ENCODE measurements at regions of chr2 and their contacts with region 1.

Region 1: GRCh38 chr2:97663965-97664635 is at the start of gene ACTR1B:
- DNase-seq: peak; percentile 92
- ATAC-seq: peak; percentile 91
- H3K4me3 ChIP-seq: peak within 1 kb of the TSS; percentile 98
- H3K27ac ChIP-seq: peak within 1 kb of the TSS; percentile 96
- H3K4me1 ChIP-seq: no peaks in the 10 kb centered on the region; the same call in 1 of the 2 replicates
- H3K27me3 ChIP-seq: no peaks in the 10 kb centered on the region
- CTCF ChIP-seq: peak; percentile 52 to 62 (median 52)
- EP300 ChIP-seq: no peak
- POLR2A ChIP-seq: peak; percentile 74
- RAD21 ChIP-seq: peak; percentile 68
- polyA plus RNA-seq, gene ACTR1B: 1.3 to 5.2 TPM

Region 2: DNA sequence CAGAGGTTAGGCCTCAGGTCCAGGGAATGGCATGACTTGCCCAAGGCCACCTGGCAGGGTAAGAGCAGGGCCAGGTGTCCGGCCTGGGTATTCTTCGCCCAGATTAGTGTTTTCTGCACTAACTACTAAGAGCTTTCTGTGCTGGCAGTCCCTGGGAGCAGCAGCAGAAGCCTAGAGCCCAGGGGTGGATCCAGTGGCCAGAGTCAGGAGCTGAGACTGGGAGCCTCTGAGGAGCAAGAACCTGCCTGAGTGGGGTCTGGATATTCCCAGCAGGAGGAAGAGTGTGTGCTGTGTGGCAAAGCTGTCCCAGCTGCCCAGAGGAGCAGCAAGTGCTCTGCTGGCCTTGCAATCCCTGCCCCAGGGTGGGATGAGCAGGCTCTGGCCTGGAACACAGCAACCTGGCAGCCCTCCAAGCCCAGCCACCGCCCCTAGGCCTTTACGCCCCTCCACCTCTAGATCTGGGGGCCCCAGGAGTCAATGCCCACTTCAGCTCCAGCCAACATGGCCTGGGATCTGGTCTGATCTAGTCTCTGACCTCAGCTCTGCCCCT is 1598.6 kb before region 1 on chr2:
- CTCF ChIA-PET with region 1: interaction called, 3 read pairs
- POLR2A ChIA-PET with region 1: interaction called, 3 read pairs
- RAD21 ChIA-PET with region 1: interaction called, 3 read pairs
- SMC1A ChIA-PET with region 1: interaction called, 3 read pairs
- in situ Hi-C with region 1: loop called (anchors 10 kb)
- intact Hi-C with region 1: no loop called
- DNase-seq: no peak
- ATAC-seq: no peak
- H3K4me3 ChIP-seq: no peak overlapping the region
- H3K27ac ChIP-seq: no peak overlapping the region
- H3K4me1 ChIP-seq: no peaks in the 10 kb centered on the region
- H3K27me3 ChIP-seq: no peaks in the 10 kb centered on the region; a peak in 1 of 4 replicates
- CTCF ChIP-seq: no peak
- EP300 ChIP-seq: no peak
- POLR2A ChIP-seq: no peak
- RAD21 ChIP-seq: no peak

Region 3: DNA sequence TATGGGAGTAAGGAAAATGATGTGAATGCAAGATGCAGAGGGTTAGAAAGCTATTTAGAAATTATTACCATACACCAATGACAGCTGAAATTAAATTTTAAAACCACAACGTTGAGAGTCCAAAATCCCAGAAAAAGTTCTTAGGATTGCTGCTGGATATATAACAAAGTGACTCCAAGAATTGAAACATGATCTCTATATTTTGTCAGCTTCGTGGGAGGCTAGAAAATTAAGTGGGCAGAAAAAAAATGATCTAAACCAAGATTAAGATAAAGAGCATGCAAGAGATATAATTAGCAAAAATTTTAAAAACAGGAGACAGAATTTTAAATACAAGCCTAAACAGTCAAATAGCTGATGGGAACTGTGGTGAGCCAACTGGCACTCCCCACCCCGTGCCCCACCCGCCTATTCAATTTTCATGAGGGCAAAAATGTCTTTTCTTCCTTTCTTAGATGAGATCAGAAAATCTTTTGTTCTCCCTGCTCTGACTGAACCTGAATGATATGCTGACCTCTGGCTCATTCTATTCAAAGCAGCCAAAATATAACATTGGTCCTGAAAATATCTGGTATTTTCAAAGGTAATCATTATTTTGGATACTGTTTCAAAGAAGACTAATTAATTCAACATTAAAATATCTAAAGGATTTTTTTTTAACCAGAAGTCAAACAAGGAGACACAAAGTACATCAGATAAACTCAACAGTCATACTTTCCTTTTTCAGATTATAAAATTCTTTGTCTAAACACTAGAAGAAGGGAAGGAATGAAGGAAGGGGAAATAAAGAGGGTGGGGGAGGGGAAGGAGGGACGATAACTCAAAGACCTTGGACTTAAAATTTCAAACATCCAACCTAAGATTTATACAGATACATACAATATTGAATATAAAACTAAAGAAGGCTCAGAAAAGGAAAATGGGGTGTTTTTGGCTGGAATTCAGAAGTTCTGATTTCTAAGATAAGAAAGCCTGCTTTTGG is 1038.2 kb before region 1 on chr2:
- CTCF ChIA-PET with region 1: no interaction called
- POLR2A ChIA-PET with region 1: no interaction called
- RAD21 ChIA-PET with region 1: no interaction called
- SMC1A ChIA-PET with region 1: no interaction called
- in situ Hi-C with region 1: no loop called
- intact Hi-C with region 1: no loop called
- DNase-seq: no peak
- ATAC-seq: no peak
- H3K4me3 ChIP-seq: no peak overlapping the region
- H3K27ac ChIP-seq: no peak overlapping the region
- H3K4me1 ChIP-seq: no peaks in the 10 kb centered on the region
- H3K27me3 ChIP-seq: no peaks in the 10 kb centered on the region
- CTCF ChIP-seq: no peak
- EP300 ChIP-seq: no peak
- POLR2A ChIP-seq: no peak
- RAD21 ChIP-seq: no peak

Region 4: GRCh38 chr2:97645695-97646629 is 18.1 kb before region 1 on chr2 and contains the start of gene COX5B:
- CTCF ChIA-PET with region 1: interaction called, 22 read pairs
- POLR2A ChIA-PET with region 1: interaction called, 132 read pairs
- RAD21 ChIA-PET with region 1: interaction called, 48 read pairs
- SMC1A ChIA-PET with region 1: interaction called, 29 read pairs
- in situ Hi-C with region 1: no loop called
- intact Hi-C with region 1: loop called (anchors 2 kb)
- DNase-seq: peak; percentile 89
- ATAC-seq: peak; percentile 97
- H3K4me3 ChIP-seq: peak within 1 kb of the TSS; percentile 99
- H3K27ac ChIP-seq: peak within 1 kb of the TSS; percentile 81
- H3K4me1 ChIP-seq: no peaks in the 10 kb centered on the region; the same call in 1 of the 2 replicates
- H3K27me3 ChIP-seq: no peaks in the 10 kb centered on the region
- CTCF ChIP-seq: no peak
- EP300 ChIP-seq: no peak
- POLR2A ChIP-seq: peak; percentile 97
- RAD21 ChIP-seq: no peak
- polyA plus RNA-seq, gene COX5B: 150 to 392 TPM

Region 5: GRCh38 chr2:97651114-97651513 is 13.0 kb before region 1 on chr2:
- CTCF ChIA-PET with region 1: interaction called, 22 read pairs
- POLR2A ChIA-PET with region 1: interaction called, 132 read pairs
- RAD21 ChIA-PET with region 1: interaction called, 48 read pairs
- SMC1A ChIA-PET with region 1: interaction called, 29 read pairs
- in situ Hi-C with region 1: no loop called
- intact Hi-C with region 1: loop called (anchors 2 kb)
- DNase-seq: no peak
- ATAC-seq: no peak
- H3K4me3 ChIP-seq: no peak overlapping the region
- H3K27ac ChIP-seq: no peak overlapping the region
- H3K4me1 ChIP-seq: no peaks in the 10 kb centered on the region
- H3K27me3 ChIP-seq: no peaks in the 10 kb centered on the region
- CTCF ChIP-seq: no peak
- EP300 ChIP-seq: no peak
- POLR2A ChIP-seq: no peak
- RAD21 ChIP-seq: no peak

Region 6: GRCh38 chr2:97688062-97688827 is 24.1 kb after region 1 on chr2:
- CTCF ChIA-PET with region 1: interaction called, 13 read pairs
- POLR2A ChIA-PET with region 1: interaction called, 16 read pairs
- RAD21 ChIA-PET with region 1: interaction called, 4 read pairs
- SMC1A ChIA-PET with region 1: interaction called, 8 read pairs
- in situ Hi-C with region 1: no loop called
- intact Hi-C with region 1: no loop called
- DNase-seq: peak; percentile 30
- ATAC-seq: peak; percentile 94
- H3K4me3 ChIP-seq: no peak overlapping the region
- H3K27ac ChIP-seq: no peak overlapping the region
- H3K4me1 ChIP-seq: peaks cover 3% of the 10 kb centered on the region; the same call in 1 of the 2 replicates
- H3K27me3 ChIP-seq: no peaks in the 10 kb centered on the region
- CTCF ChIP-seq: no peak
- EP300 ChIP-seq: no peak
- POLR2A ChIP-seq: no peak
- RAD21 ChIP-seq: no peak

Region 7: DNA sequence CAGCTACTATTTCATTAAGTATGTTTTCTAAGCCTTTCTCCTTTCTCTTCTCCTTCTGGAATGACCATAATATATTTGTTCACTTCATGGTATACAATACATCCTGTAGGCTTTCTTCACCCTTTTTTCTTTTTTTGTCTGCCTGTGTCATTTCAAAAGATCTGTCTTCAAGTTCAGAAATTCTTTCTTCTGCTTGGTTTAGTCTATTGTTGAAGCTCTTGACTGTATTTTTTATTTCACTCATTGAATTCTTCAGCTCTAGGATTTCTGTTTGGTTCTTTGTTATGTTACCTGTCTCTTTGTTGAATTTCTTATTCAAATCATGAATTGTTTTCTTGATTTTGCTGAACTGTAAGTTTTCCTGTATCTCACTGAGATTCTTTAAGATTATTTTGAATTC is 221.7 kb after region 1 on chr2:
- CTCF ChIA-PET with region 1: no interaction called
- POLR2A ChIA-PET with region 1: no interaction called
- RAD21 ChIA-PET with region 1: no interaction called
- SMC1A ChIA-PET with region 1: no interaction called
- in situ Hi-C with region 1: no loop called
- intact Hi-C with region 1: no loop called
- DNase-seq: no peak
- ATAC-seq: no peak
- H3K4me3 ChIP-seq: no peak overlapping the region
- H3K27ac ChIP-seq: no peak overlapping the region
- H3K4me1 ChIP-seq: no peaks in the 10 kb centered on the region; the same call in 1 of the 2 replicates
- H3K27me3 ChIP-seq: no peaks in the 10 kb centered on the region
- CTCF ChIP-seq: no peak
- EP300 ChIP-seq: no peak
- POLR2A ChIP-seq: no peak
- RAD21 ChIP-seq: no peak

Region 8: DNA sequence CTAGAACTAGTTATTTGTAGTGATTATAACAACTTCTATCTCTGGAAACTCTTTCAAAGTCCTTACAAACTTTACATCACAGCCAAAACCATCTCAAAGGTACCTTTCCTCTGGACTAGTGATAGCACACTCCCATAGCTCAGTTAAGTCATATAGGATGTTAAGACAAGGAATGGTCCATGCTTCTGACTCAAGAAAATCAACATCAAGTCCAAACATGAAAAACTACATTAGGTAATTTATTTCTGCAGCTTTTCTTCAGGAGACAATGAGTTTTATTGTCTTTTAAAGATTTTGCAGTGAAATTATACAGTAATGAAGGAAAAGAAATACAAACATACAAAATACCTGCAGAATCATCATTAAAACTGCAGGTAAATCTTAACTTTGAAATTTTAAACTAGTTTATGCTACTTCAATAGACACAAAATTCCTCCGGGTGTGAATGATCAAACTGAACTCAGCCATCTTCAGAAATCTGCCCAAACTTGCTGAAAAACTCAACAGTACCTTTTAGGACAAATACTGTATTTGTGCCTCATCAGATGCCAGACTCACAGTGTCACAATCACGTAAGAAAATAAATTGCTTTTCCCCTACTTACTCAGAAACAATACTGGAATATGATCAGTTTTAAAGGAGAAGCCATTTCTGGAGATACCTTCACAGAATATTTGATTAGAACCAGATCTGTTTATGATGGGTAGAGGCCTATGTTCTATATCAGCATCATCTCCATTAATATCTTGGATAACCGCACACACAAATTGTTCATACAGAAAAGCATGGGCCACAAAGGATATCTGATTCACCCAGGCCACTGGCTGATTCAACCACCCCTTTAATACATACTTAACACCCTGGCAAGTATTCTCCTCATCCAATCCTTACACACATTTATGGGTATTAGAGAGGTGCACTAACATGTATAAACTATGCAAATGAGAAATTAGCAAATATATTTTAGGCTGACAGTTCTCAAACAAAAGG is 329.0 kb after region 1 on chr2:
- CTCF ChIA-PET with region 1: no interaction called
- POLR2A ChIA-PET with region 1: no interaction called
- RAD21 ChIA-PET with region 1: no interaction called
- SMC1A ChIA-PET with region 1: no interaction called
- in situ Hi-C with region 1: no loop called
- intact Hi-C with region 1: no loop called
- DNase-seq: no peak
- ATAC-seq: no peak
- H3K4me3 ChIP-seq: peak overlapping the region; percentile 83
- H3K27ac ChIP-seq: peak overlapping the region; percentile 94
- H3K4me1 ChIP-seq: peaks cover 27% of the 10 kb centered on the region
- H3K27me3 ChIP-seq: no peaks in the 10 kb centered on the region
- CTCF ChIP-seq: no peak
- EP300 ChIP-seq: no peak
- POLR2A ChIP-seq: no peak
- RAD21 ChIP-seq: no peak

Measured in GM12878 (cell line).